HepG2 (cell line): ENCODE measurements at regions of chr17 and their contacts with region 1.

Region 1: DNA sequence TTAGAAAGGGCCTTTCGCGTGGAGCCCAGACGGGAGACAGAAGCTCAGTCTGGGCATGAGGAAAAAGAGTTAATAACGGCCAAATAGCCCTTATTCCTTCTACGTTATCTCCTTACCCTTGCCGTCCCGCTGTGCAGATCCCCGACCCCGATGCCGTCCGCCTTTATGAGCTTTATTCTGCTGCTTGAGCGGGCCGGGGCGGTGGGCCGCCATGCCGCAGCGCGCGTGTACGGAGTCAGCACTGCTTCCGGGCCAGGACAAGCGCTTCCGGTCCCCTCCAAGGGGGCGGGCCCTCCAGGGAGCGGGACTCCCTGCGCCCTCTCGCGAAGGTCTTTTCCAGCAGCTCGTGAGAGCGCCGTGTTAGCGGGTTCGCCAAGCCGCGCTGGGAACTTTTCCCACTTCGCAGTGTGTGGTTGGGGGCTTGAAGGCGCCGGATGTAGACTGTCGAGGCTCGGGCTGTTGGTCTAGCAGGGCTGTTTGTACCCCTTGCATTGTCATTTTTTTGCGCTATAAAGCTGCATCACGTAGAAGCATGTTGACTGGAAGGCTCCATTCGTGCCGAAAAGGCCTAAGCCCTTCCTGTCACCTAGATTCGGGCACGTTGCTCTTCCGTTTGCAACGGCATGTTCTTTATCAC is at the start of gene TSR1:
- DNase-seq: peak; percentile 87
- ATAC-seq: peak; percentile 95
- H3K4me3 ChIP-seq: peak within 1 kb of the TSS; percentile 67 to 100 (median 99)
- H3K27ac ChIP-seq: peak within 1 kb of the TSS; percentile 77
- H3K4me1 ChIP-seq: peaks cover 35% of the 10 kb centered on the region
- H3K27me3 ChIP-seq: no peaks in the 10 kb centered on the region; a peak in 1 of 5 replicates
- CTCF ChIP-seq: peak; percentile 76
- EP300 ChIP-seq: peak in 1 of 2 experiments; percentile 33; a peak in 1 of 4 replicates
- POLR2A ChIP-seq: peak; percentile 90 to 97
- RAD21 ChIP-seq: peak; percentile 43
- total RNA-seq, gene TSR1: 65.8 and 75.8 TPM in 2 replicates

Region 2: DNA sequence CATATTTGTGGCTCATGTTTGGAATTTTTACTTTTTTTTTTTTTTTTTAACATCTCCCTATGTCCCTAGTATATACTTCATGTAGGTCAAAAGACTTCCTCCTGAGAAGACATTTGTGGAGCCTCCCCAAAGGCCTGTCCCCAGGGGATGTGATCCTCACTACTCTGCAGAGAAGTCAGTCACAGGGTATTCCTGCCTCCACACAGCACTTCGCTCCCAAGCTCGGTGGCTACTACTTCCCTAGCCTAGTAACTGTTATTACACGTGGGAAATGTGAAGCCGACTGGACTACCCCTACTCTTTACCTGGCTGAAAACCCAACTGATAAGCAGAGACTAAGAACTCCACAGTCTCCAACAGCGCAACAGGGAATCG is 164.6 kb before region 1 on chr17:
- CTCF ChIA-PET with region 1: no interaction called
- POLR2A ChIA-PET with region 1: no interaction called
- in situ Hi-C with region 1: no loop called
- intact Hi-C with region 1: no loop called
- DNase-seq: no peak
- ATAC-seq: no peak
- H3K4me3 ChIP-seq: no peak overlapping the region
- H3K27ac ChIP-seq: peak overlapping the region; percentile 10
- H3K4me1 ChIP-seq: peaks cover 53% of the 10 kb centered on the region
- H3K27me3 ChIP-seq: no peaks in the 10 kb centered on the region
- CTCF ChIP-seq: no peak
- EP300 ChIP-seq: no peak
- POLR2A ChIP-seq: no peak
- RAD21 ChIP-seq: no peak

Region 3: GRCh38 chr17:2303204-2304188 is 32.8 kb before region 1 on chr17 and contains the starts of genes SMG6 and SRR:
- CTCF ChIA-PET with region 1: no interaction called
- POLR2A ChIA-PET with region 1: interaction called, 23 read pairs
- in situ Hi-C with region 1: no loop called
- intact Hi-C with region 1: no loop called
- DNase-seq: peak; percentile 74
- ATAC-seq: peak; percentile 95
- H3K4me3 ChIP-seq: peak within 1 kb of the TSS; percentile 75 to 92 (median 91)
- H3K27ac ChIP-seq: peak within 1 kb of the TSS; percentile 92
- H3K4me1 ChIP-seq: peaks cover 25% of the 10 kb centered on the region
- H3K27me3 ChIP-seq: no peaks in the 10 kb centered on the region; a peak in 1 of 5 replicates
- CTCF ChIP-seq: 0 out of 2 replicates have a peak, but pooled peaks have one; percentile 3
- EP300 ChIP-seq: no peak
- POLR2A ChIP-seq: peak; percentile 83 to 91
- RAD21 ChIP-seq: peak; percentile 26; the same call in 1 of the 2 replicates
- total RNA-seq, gene SMG6: 14.6 and 15.4 TPM in 2 replicates
- total RNA-seq, gene SRR: 3.6 and 8.5 TPM in 2 replicates

Region 4: DNA sequence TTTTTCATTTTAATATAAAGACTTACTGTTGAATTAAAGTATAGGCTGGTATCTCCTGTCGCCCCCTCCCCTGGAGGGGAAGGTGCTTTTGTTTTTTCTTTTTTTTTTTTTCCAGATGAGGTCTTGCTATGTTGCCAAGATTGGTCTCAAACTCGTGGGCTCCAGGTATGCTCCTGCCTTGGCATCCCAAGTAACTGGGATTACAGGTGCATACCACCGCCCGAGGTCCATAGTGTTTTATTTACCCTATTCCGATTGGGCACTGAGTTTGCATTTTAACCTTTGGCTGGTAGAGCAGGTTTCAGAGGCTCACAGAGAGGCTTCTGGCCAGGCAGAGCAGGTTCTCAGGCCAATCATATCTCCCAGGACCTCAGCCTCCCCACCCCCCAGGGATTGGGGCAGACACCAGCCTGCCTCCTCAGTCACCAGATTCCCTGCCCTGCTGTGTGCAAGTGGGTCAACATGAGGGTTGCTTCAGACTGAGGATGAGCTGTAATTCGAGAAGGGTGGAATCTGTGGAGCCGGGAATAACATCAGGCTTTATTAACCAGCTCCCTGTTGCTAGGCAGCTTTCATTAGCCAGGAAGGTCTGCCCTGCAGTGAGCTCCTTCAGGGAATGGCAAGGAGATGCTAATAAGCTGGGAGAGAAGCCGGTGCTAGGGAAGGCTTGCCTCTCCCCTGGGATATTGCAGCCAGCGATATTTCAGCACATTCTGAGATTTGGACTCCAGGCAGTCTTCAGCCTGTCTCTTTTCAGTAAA is 11.4 kb after region 1 on chr17:
- CTCF ChIA-PET with region 1: interaction called, 5 read pairs
- POLR2A ChIA-PET with region 1: interaction called, 18 read pairs
- in situ Hi-C with region 1: no loop called
- intact Hi-C with region 1: loop called (anchors 2 kb)
- DNase-seq: peak; percentile 92
- ATAC-seq: peak; percentile 98
- H3K4me3 ChIP-seq: no peak overlapping the region
- H3K27ac ChIP-seq: peak overlapping the region; percentile 65
- H3K4me1 ChIP-seq: peaks cover 16% of the 10 kb centered on the region
- H3K27me3 ChIP-seq: no peaks in the 10 kb centered on the region
- CTCF ChIP-seq: peak; percentile 16; the same call in 1 of the 2 replicates
- EP300 ChIP-seq: peak in 1 of 2 experiments; percentile 52; a peak in 1 of 4 replicates
- POLR2A ChIP-seq: no peak
- RAD21 ChIP-seq: no peak

Region 5: DNA sequence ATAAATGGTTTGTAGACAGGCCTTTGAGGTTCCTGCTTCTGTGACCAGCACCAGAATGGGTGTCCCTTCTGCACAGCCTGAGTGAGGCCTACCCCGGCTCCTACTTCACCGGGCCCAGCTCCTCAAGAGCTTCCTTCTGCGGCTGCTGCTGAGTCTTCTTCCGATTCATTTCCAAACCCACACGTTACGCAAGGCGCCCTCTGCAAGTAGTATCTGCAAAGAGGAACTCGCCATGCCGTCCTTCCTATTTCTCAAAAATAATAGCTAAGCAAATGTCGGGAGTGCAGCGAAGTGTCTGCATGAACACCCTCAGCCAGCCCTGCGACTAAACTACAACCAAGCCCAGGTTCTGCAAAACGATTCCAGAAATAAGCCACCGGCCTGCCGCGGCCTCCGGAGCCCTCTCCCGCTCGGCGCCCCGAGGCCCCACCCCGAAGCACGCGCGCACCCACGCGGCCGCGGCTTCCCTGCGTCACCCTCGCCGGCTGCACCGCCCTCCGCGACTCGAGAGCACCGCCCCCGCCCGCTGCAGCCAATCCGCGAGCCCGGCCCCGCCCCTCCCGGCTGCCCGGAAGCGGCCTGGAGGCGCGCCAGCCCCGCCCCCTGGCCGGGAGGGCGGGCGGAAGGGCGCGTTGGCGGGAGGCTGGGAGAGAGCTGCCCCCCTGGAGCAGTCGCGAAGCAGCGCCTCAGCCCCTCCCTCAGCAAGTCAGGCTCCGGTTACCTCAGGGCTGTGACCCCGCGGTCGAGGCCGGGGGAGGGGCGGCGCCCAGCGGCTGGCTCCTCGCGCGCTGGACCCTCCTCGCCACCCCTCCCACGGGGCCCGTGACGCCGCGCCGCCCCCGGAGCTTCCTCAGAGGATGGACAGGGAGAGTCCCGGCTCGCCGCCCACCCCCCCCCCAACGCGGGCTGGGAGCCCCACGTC is 56.2 kb after region 1 on chr17:
- CTCF ChIA-PET with region 1: no interaction called
- POLR2A ChIA-PET with region 1: interaction called, 10 read pairs
- in situ Hi-C with region 1: no loop called
- intact Hi-C with region 1: no loop called
- DNase-seq: peak; percentile 81
- ATAC-seq: peak; percentile 31
- H3K4me3 ChIP-seq: peak overlapping the region; percentile 50 to 72 (median 62); a peak in 5 of 6 replicates
- H3K27ac ChIP-seq: peak overlapping the region; percentile 80
- H3K4me1 ChIP-seq: peaks cover 42% of the 10 kb centered on the region
- H3K27me3 ChIP-seq: no peaks in the 10 kb centered on the region
- CTCF ChIP-seq: peak; percentile 4; the same call in 1 of the 2 replicates
- EP300 ChIP-seq: 0 out of 4 replicates have a peak, but pooled peaks of 1 of the 2 experiments have one; percentile 4
- POLR2A ChIP-seq: peak; percentile 46 to 64; a peak in 3 of 4 replicates
- RAD21 ChIP-seq: no peak; the same call in 1 of the 2 replicates

Region 6: DNA sequence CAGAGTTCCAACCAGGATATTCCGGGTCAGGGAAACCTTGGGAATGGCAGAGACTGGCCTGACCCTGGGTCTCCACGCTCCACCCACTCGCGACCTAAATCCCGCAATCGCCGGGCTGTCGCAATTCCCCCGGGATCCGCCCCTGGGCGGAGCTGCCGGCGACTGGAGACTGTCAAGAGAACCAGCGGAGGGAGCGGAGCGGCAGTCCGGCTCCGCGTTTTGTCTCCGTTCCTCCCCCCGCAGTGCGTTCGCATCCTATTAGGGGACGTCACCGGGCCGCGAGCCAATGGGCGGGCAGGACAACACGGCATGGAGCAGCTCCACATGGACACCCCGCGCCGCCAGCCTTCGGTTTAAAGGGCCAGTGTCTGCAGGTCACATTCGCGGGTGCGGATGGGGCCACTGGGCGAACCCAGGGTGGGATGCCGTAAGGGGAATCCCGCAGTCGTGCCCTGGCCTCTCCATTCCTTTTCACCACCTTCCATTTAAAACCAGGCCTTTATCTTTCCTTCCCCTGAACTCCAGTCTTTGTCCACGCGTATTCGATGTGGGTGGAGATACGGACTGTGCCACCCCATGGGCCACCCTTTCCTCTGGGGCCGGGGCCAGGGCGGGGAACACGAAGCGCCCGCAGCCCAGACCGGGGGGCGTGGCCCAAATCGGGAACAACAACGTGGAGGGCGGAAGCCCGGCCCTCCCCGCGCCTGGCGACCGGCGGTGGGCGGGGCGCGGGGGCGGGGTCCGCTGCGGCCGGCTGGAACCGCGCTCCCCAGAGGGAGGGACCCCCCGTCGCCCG is 65.3 kb after region 1 on chr17:
- CTCF ChIA-PET with region 1: no interaction called
- POLR2A ChIA-PET with region 1: interaction called, 10 read pairs
- in situ Hi-C with region 1: no loop called
- intact Hi-C with region 1: loop called (anchors 5 kb)
- DNase-seq: peak; percentile 96
- ATAC-seq: peak; percentile 57
- H3K4me3 ChIP-seq: peak overlapping the region; percentile 76 to 96 (median 87)
- H3K27ac ChIP-seq: peak overlapping the region; percentile 100
- H3K4me1 ChIP-seq: peaks cover 44% of the 10 kb centered on the region
- H3K27me3 ChIP-seq: no peaks in the 10 kb centered on the region; a peak in 2 of 5 replicates
- CTCF ChIP-seq: no peak
- EP300 ChIP-seq: no peak
- POLR2A ChIP-seq: peak in 1 of 2 experiments; percentile 64; a peak in 2 of 4 replicates
- RAD21 ChIP-seq: peak; percentile 30; the same call in 1 of the 2 replicates